ENCODE measurements at regions of chr14 and their contacts with region 1.

Region 1: DNA sequence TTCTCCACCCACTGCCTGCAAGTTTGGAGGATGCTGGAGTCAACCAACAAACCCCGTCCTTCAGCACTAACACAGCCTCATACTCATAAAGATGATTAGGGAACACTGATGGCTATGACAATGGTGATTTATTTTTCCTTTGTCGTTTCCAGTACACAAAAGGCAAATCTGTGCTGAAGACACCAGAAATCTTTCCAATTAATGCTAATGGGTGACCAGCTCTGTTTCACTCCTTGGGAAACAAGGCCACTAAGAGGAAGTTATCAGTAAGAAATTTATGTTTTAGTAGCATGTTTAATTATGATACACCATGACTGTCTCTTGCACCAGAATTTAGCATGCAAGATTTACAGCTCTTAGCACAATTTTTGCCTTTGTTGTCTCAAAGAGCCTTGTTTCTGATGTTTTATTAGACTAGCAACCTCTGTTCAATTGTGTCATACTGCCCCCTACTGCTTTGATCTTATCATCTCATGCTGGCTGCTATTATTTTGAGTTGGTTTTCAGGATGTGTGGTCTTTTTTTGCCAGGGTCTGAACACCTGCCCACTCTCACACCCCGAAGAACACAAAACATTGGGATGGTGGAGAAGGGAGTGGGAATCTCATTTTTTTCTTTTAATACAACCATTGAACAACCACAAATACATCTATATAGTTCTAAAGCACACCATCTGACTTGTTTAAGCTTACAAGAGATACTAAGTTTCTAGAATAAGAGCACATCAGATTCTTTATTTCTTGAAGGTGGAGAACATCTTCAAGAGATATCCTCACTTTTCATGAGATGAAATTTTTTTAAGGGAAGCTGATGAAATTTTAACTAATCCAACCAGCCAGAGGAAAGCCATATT is 160.9 kb downstream of the SPTSSA start:
- DNase-seq: peak; percentile 54
- H3K4me3 Mint-ChIP-seq: no peak overlapping the region
- H3K27ac Mint-ChIP-seq: no peak overlapping the region
- H3K4me1 Mint-ChIP-seq: peaks cover 10% of the 10 kb centered on the region
- H3K27me3 Mint-ChIP-seq: peaks cover 17% of the 10 kb centered on the region
- CTCF ChIP-seq: peak; percentile 37

Region 2: GRCh38 chr14:33676135-33676566 is 625.0 kb before region 1 on chr14:
- CTCF ChIA-PET with region 1: interaction called, 4 read pairs
- intact Hi-C with region 1: loop called (anchors 5 kb)
- DNase-seq: peak; percentile 53
- H3K4me3 Mint-ChIP-seq: no peak overlapping the region
- H3K27ac Mint-ChIP-seq: no peak overlapping the region
- H3K4me1 Mint-ChIP-seq: no peaks in the 10 kb centered on the region
- H3K27me3 Mint-ChIP-seq: peaks cover 21% of the 10 kb centered on the region
- CTCF ChIP-seq: no peak

Region 3: GRCh38 chr14:33792720-33793368 is 508.3 kb before region 1 on chr14:
- CTCF ChIA-PET with region 1: interaction called, 3 read pairs
- intact Hi-C with region 1: loop called (anchors 2 kb)
- DNase-seq: peak; percentile 81
- H3K4me3 Mint-ChIP-seq: no peak overlapping the region
- H3K27ac Mint-ChIP-seq: no peak overlapping the region
- H3K4me1 Mint-ChIP-seq: no peaks in the 10 kb centered on the region
- H3K27me3 Mint-ChIP-seq: peaks cover 45% of the 10 kb centered on the region
- CTCF ChIP-seq: peak; percentile 62

Region 4: DNA sequence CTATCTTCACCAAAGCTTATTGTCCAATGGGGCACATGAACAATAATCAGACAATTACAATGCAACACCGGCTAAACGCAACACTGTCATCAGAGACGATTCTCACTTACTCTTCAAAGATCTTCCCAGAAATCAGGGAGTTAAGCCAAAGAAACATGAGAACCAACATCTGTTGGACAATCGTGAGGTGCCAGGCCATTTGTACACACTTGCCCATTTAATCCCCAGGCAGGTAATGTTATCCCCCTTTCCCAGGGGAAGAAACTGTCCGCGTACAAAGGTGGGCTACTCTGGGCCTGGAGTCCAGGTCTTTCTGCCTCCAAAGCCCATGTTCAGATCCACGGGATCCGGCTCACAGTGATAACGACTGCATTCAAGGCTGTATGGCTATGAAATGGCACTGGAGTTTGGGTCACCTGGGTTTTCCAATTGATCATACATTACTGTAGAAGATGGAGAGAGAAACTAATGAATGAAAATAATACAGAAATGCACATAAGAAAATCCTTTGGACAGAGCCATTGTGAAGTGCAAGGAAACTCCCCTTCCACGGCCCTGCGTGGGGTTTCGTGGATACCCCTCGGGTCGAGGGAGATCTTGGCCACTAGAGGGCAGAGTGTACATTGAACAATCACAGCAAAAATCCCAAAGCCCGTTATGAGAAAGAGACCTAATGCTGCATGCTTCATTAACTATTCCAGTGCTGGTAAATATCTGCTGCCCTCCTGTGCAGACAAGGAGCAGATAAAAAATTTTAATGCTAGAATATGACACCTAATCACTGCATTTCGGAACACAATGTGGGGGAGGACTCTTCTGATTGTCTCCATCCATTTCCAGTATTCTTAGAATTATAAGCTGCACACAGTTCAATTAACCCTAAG is 461.7 kb before region 1 on chr14:
- CTCF ChIA-PET with region 1: interaction called, 7 read pairs
- intact Hi-C with region 1: loop called (anchors 2 kb)
- DNase-seq: peak; percentile 46
- H3K4me3 Mint-ChIP-seq: no peak overlapping the region
- H3K27ac Mint-ChIP-seq: no peak overlapping the region
- H3K4me1 Mint-ChIP-seq: no peaks in the 10 kb centered on the region
- H3K27me3 Mint-ChIP-seq: no peaks in the 10 kb centered on the region
- CTCF ChIP-seq: peak; percentile 80

Region 5: DNA sequence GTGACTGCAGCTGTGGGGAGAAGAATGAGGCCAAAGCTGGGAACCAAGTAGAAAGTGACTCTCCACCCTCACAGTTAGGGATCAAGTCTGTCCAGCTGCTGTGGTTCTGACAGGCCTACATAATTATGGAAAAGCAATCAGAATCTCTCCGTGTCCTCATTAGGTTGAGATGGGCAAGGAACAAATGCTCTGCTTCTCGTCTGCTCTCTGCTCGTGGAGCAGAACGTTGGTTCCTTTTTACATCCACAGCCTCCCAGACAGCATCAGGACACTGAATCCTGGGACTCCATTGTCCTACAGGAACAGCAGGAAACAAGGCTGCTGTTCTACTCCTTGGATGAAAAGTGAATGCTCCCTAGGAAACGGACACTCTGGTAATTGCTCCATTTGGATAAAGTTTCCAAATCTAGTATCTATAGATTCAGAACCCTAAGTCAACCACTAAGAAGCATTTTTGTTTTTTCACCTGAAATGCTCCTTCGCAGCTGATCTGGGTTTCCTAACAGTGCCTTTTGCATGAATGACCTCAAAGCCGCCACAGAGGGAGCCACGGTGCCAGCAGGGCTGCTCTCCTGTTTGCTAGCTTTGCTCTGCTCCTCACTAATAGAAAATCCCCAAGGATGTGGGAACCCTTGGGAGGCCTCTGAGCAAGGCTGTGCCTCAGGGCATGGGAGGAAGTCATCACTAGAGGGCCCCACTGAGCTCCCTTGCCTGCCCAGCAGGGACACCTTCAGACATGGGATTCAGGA is 452.2 kb before region 1 on chr14:
- CTCF ChIA-PET with region 1: interaction called, 15 read pairs
- intact Hi-C with region 1: no loop called
- DNase-seq: peak; percentile 85
- H3K4me3 Mint-ChIP-seq: no peak overlapping the region
- H3K27ac Mint-ChIP-seq: no peak overlapping the region
- H3K4me1 Mint-ChIP-seq: no peaks in the 10 kb centered on the region
- H3K27me3 Mint-ChIP-seq: peaks cover 38% of the 10 kb centered on the region
- CTCF ChIP-seq: peak; percentile 44

Region 6: GRCh38 chr14:34113005-34113511 is 188.1 kb before region 1 on chr14:
- CTCF ChIA-PET with region 1: no interaction called
- intact Hi-C with region 1: loop called (anchors 5 kb)
- DNase-seq: peak; percentile 37
- H3K4me3 Mint-ChIP-seq: no peak overlapping the region
- H3K27ac Mint-ChIP-seq: peak overlapping the region; percentile 79
- H3K4me1 Mint-ChIP-seq: peaks cover 38% of the 10 kb centered on the region
- H3K27me3 Mint-ChIP-seq: no peaks in the 10 kb centered on the region
- CTCF ChIP-seq: no peak

Region 7: DNA sequence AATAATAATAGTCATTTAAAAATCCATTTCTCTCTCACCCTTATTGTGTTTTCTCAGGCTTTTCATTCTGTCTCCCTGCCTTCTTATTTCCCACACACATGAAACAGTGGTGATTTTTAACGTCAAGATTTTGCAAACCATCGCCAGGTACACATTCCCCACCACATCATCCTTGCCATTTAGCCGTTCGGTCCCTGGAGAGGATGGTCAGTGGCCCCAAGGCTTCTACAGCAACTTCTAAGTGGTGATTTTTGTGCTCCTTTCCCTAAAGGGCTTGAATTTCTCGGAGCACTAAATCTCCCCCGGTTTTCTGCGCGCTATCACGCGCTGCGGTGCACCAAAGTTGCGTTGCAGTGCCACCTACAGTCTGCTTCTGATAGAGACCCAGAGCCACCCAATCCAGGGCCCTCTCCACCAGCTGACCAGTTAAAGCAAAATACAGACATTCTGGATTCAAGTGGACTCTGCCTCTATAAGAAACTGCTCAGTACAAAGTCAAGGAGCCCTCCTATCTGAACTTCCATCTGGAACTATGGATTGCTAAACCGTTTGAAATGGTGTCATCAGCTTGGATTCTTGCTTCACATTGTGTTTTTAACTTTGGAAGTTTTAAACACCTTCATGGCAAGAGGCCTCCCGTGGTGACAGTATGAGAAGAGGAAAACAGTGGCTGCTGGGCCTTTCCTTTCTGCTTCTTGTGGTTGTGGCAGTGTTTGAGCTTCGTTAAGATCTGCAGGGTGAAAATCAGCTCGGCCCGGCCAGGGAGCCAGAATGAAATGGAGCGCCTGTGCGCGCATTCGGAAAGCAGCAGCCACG is 73.1 kb before region 1 on chr14:
- CTCF ChIA-PET with region 1: no interaction called
- intact Hi-C with region 1: loop called (anchors 1 kb)
- DNase-seq: peak; percentile 75
- H3K4me3 Mint-ChIP-seq: no peak overlapping the region
- H3K27ac Mint-ChIP-seq: no peak overlapping the region
- H3K4me1 Mint-ChIP-seq: peaks cover 43% of the 10 kb centered on the region
- H3K27me3 Mint-ChIP-seq: no peaks in the 10 kb centered on the region
- CTCF ChIP-seq: peak; percentile 63

Region 8: DNA sequence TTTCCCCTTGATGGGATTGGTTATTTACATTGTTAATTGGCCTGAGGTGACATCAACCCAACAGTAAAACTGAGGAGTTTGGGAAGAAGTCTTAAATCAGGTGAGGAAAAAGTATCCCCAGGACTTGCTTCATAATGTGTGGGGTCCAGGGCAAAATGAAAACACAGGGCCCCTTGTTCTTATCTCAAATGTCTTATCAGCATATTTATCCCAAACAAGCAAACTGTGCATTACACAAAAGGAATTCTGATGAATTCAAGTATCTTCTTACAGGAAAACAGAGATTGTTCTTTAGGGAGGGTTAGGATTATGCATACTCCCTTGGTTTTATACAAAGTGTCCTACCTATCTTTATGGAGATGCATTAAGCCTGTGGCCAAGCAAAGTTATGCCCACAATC is 17.5 kb before region 1 on chr14:
- CTCF ChIA-PET with region 1: no interaction called
- intact Hi-C with region 1: no loop called
- DNase-seq: no peak
- H3K4me3 Mint-ChIP-seq: no peak overlapping the region
- H3K27ac Mint-ChIP-seq: no peak overlapping the region
- H3K4me1 Mint-ChIP-seq: no peaks in the 10 kb centered on the region
- H3K27me3 Mint-ChIP-seq: no peaks in the 10 kb centered on the region
- CTCF ChIP-seq: no peak